T-cell (primary cell): ENCODE measurements at regions of chr1 and their contacts with region 1.

Region 1: DNA sequence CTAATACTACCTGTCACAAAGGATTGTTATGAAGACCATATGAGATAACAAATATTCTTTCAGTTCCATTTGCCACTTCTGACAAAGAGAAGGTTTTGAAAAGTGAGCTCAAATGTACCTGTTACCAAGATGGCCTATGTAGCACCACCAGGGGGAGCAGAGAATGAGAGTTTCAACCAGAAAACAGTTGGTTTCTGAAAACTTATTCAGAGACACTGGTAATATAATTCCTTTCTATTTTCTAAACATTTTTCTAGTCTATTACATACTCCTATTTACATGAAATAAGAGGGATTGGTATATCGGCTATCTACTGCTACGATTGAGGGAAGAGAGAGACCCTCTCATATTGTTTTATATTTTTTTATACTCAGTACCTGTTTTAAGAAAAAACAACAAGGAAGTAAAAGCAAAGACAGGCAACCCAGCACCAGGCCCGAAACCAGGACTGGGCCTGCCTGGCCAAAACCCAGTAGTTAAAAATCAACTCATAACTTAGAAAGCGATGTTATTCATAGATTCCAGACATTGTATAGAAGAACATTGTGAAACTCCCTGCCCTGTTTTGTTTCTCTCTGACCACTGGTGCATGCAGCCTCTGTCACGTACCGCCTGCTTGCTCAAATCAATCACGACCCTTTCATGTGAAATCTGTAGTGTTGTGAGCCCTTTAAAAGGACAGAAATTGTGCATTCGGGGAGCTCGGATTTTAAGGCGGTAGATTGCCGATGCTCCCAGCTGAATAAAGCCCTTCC is 48.3 kb downstream of the IL23R start:
- DNase-seq: peak in 31 of 35 experiments; percentile 9 to 64 (median 39)
- ATAC-seq: peak in 1 of 4 experiments; percentile 31
- H3K4me3 ChIP-seq: no peak overlapping the region
- H3K4me3 Mint-ChIP-seq: no peak overlapping the region
- H3K27ac ChIP-seq: no peak overlapping the region
- H3K27ac Mint-ChIP-seq: no peak overlapping the region
- H3K4me1 ChIP-seq: peaks cover 10 to 14% of the 10 kb centered on the region in 2 experiments
- H3K4me1 Mint-ChIP-seq: peaks cover 23 to 26% (median 25%) of the 10 kb centered on the region in 3 donors
- H3K27me3 ChIP-seq: no peaks in the 10 kb centered on the region
- H3K27me3 Mint-ChIP-seq: no peaks in the 10 kb centered on the region

Region 2: GRCh38 chr1:66996018-66996682 is 218.4 kb before region 1 on chr1:
- CTCF ChIA-PET with region 1: interaction called, 5 to 25 read pairs
- POLR2A ChIA-PET with region 1: no interaction called
- DNase-seq: peak; percentile 30 to 73 (median 53)
- ATAC-seq: peak; percentile 69 to 82 (median 81)
- H3K4me3 ChIP-seq: no peak overlapping the region
- H3K4me3 Mint-ChIP-seq: no peak overlapping the region
- H3K27ac ChIP-seq: no peak overlapping the region
- H3K27ac Mint-ChIP-seq: no peak overlapping the region
- H3K4me1 ChIP-seq: peaks cover 0 to 4% of the 10 kb centered on the region in 2 experiments
- H3K4me1 Mint-ChIP-seq: peaks cover 21 to 25% (median 23%) of the 10 kb centered on the region in 3 donors
- H3K27me3 ChIP-seq: no peaks in the 10 kb centered on the region
- H3K27me3 Mint-ChIP-seq: no peaks in the 10 kb centered on the region

Region 3: DNA sequence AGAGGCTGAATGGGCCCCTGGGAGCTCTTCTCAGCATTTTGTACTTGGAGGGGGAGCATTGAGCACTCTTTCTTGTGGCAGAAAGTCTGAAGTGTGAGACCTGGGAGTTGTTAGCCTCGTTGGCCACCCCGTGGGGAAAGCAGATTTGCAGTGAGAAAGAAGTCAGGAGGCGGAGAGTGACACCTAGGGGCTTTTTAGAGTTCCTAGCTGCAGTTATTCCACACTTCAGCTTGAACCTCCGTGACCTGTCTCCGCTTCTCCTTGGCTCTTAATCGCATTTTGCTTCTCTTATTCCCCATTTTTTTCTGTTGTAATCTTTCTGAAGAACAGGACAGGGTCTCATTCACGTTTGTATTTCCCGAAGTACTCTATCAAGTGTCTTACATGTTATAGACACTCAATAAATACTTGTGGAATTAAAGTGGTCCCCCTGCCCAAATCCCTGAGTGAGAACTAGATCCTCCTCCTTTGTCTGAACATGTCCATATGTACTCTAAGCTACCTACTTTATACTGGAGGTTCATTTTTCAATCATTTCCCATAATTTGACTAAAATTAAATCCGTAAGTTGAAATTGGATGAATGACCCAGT is 65.3 kb before region 1 on chr1:
- CTCF ChIA-PET with region 1: interaction called, 13 to 131 read pairs
- POLR2A ChIA-PET with region 1: no interaction called
- DNase-seq: peak; percentile 41 to 79 (median 58)
- ATAC-seq: peak; percentile 83 to 98 (median 88)
- H3K4me3 ChIP-seq: no peak overlapping the region
- H3K4me3 Mint-ChIP-seq: no peak overlapping the region
- H3K27ac ChIP-seq: no peak overlapping the region
- H3K27ac Mint-ChIP-seq: no peak overlapping the region
- H3K4me1 ChIP-seq: peaks cover 6 to 14% of the 10 kb centered on the region in 2 experiments
- H3K4me1 Mint-ChIP-seq: peaks cover 26 to 30% (median 27%) of the 10 kb centered on the region in 3 donors
- H3K27me3 ChIP-seq: no peaks in the 10 kb centered on the region
- H3K27me3 Mint-ChIP-seq: peaks cover 0 to 5% of the 10 kb centered on the region in 2 donors

Region 4: GRCh38 chr1:67194209-67194863 is 20.3 kb before region 1 on chr1:
- CTCF ChIA-PET with region 1: interaction called, 4 to 14 read pairs
- POLR2A ChIA-PET with region 1: no interaction called
- DNase-seq: peak in 1 of 35 experiments; percentile 71
- ATAC-seq: peak in 3 of 4 experiments; percentile 43 to 76 (median 53)
- H3K4me3 ChIP-seq: no peak overlapping the region
- H3K4me3 Mint-ChIP-seq: no peak overlapping the region
- H3K27ac ChIP-seq: peak overlapping the region; percentile 48
- H3K27ac Mint-ChIP-seq: no peak overlapping the region
- H3K4me1 ChIP-seq: peaks cover 4 to 18% of the 10 kb centered on the region in 2 experiments
- H3K4me1 Mint-ChIP-seq: peaks cover 4 to 36% (median 28%) of the 10 kb centered on the region in 3 donors
- H3K27me3 ChIP-seq: peaks cover 0 to 6% of the 10 kb centered on the region in 2 experiments
- H3K27me3 Mint-ChIP-seq: peaks cover 0 to 4% of the 10 kb centered on the region in 2 donors

Region 5: DNA sequence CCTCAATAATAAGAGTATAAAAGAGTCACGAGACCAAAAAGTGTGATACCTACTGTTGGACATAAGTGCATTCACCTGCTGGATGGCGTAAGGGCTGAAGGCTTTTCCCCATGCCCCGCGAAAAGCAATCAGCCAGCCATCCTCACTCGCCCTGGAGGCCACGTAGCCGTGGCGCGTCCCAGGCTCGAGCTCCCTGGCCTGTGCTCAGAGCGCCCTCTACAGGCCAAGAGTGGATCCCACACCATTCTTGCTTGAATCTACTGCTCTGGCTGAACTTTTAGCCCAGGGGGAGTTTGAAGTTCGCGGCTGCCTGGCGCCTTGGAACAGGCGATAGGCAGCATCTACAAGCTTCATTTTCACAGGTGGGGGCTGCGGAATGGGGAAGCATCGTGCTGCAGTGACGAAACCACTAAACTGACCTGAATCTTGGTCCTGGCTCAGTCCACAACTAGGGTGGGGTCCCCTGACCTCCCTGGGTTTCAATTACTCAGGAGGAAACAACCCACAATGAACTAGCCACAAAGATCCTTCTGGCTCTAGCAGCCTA is 285.9 kb after region 1 on chr1:
- CTCF ChIA-PET with region 1: interaction called, 26 to 49 read pairs
- POLR2A ChIA-PET with region 1: no interaction called
- DNase-seq: peak; percentile 67 to 91 (median 80)
- ATAC-seq: peak; percentile 97 to 99 (median 98)
- H3K4me3 ChIP-seq: no peak overlapping the region
- H3K4me3 Mint-ChIP-seq: no peak overlapping the region
- H3K27ac ChIP-seq: no peak overlapping the region
- H3K27ac Mint-ChIP-seq: no peak overlapping the region
- H3K4me1 ChIP-seq: peaks cover 0 to 6% of the 10 kb centered on the region in 2 experiments
- H3K4me1 Mint-ChIP-seq: peaks cover 4 to 6% (median 5%) of the 10 kb centered on the region in 3 donors
- H3K27me3 ChIP-seq: peaks cover 0 to 3% of the 10 kb centered on the region in 2 experiments
- H3K27me3 Mint-ChIP-seq: peaks cover 4 to 9% of the 10 kb centered on the region in 2 donors